Right ventricle myocardium inferior (tissue), 1 donor: ENCODE measurements at regions of chr1 and their contacts with region 1.

Region 1: DNA sequence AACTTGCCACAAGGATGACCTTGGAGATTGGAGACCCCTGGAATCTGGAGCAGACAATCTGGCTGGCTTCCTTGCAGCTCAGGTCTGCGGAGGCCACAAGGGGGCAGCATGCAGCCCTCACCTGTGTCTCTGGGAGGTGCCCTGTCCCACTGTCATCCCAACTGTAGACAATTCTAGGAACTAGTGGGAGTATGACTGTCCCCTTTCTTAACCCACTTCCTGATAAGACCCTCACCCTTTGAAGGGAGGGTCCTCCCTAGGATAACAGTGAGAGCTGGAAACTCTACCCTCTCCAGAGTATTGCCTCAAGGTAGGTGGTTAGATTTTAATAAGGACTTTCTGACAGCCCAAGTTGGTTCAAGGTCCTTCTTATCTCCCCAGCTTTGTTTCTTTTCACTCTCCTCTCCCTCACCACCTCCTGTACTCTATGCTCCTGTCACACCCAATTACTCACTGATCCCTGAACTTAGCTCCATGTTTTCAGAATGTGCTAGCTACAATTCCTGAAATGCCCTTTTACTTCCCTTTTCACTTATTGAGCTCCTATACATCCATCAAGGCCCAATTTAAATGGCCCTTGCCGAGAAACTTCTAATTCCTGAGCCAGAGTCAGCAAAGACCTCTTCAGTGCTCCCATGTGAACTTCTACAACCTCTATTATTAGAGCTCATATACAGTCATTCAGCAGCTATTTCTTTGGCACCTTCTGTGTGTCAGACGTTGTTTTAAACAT is 9.2 kb upstream of the KCNQ4 start:
- DNase-seq: peak; percentile 80
- ATAC-seq: peak; percentile 56

Region 2: DNA sequence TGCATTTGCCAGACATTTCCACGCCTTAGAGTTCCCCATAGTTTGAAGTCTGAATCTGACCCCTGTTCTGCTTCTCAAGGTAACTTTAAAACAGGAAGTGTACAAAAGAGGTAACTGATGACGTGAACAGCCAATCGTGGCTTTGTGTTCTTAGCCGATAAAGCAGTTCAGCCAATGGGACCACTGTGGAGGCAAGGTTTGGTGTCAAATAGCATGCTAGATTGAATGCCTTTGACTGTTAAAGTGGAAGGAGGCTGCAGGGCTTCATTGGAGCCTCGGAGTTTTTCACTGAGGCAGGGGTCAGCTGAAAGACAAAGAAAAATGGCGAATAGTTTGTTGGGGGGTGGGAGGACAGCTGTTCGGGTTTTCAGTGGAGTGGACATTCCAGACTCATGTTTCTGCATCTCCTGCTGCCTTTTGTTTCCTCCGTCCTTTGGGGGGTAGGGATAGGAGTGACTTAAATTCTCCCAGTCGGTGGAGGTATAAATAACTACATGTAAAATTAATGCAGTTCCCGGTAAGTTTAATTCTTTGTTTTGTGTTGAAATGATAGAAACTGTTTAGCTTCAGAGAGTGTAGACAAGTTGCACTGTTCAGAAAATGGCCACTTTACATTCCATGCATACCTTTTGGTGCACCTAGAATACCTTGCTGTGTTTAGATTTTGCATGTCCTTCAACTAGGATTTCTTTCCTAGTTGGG is 65.2 kb before region 1 on chr1:
- intact Hi-C with region 1: loop called (anchors 2 kb)
- DNase-seq: peak; percentile 67
- ATAC-seq: peak; percentile 96

Region 3: DNA sequence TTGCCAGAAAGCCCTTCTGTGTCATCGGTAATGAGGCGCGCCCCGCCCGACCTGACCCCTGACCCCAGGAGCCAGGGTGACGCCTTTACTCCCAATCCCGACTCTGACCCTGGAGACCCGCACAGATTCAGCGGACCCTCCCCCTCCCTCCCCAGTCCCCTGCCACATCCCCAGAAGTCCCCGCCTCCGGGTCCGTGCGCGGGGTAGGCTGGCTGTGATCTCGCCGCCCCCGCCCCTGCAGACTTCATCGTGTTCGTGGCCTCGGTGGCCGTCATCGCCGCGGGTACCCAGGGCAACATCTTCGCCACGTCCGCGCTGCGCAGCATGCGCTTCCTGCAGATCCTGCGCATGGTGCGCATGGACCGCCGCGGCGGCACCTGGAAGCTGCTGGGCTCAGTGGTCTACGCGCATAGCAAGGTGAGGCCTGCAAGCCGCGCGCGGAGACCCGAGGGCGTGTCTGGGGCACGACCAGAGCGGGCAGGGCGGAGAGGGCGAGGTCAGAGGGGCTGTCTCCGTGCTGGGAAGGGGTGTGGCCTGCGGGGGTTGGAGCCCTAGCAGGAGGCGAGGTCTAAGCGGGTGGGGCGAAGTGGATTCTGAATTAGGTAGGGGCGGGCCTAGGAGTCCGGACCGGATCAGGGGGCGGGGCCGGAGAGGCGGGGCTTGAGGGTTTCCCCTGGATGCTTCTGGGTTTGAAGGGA is 44.0 kb after region 1 on chr1:
- intact Hi-C with region 1: no loop called
- DNase-seq: peak; percentile 87
- ATAC-seq: peak; percentile 76

Region 4: DNA sequence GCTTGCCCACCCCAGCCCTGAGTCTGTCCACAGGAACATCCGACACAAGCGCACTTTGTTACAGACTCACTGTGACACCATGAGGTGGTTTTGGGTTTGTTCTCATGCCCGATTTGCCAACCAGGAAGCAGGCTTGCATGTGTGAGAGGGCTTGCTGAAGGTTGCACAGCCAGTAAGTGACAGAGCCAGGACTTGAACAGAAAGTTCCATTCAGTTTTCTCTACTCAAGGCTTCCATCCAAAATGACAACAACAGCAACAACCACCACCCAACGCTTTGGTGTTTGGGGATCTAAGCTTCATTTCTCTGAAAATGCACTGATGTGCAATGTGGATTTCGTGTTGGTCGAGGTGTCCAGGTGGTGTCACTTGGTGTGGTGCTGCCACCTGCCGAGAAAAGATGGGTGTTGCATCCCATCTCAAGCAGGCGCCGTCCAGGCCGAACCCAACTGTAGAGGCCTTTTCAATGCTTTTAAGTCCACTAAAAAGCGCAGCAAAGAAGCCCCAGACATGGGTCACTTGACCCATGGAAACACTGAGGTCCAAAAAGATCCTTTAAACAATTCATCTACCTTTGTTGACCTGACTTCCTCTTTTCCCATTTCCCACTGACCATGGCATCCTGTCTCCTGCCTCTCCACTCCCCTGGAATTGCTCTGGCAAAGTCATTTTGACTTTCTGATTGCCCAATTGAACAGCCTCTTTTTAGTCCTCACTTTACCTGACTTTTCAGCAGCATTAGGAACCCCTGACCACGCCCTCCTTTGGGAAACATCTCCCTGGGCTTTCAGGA is 75.6 kb after region 1 on chr1:
- intact Hi-C with region 1: loop called (anchors 1 kb)
- DNase-seq: peak; percentile 86
- ATAC-seq: peak; percentile 77

Region 5: GRCh38 chr1:40951943-40952743 is 177.7 kb after region 1 on chr1:
- intact Hi-C with region 1: loop called (anchors 5 kb)
- DNase-seq: peak; percentile 84
- ATAC-seq: peak; percentile 77